A673 (cell line): ENCODE measurements at regions of chr1 and their contacts with region 1.

Region 1: GRCh38 chr1:160078512-160079195 is 2.7 kb upstream of the KCNJ9 start:
- DNase-seq: peak; percentile 66
- H3K4me3 ChIP-seq: no peak overlapping the region
- H3K27ac ChIP-seq: no peak overlapping the region
- H3K4me1 ChIP-seq: no peaks in the 10 kb centered on the region
- H3K27me3 ChIP-seq: peaks cover 47% of the 10 kb centered on the region
- CTCF ChIP-seq: peak; percentile 95

Region 2: DNA sequence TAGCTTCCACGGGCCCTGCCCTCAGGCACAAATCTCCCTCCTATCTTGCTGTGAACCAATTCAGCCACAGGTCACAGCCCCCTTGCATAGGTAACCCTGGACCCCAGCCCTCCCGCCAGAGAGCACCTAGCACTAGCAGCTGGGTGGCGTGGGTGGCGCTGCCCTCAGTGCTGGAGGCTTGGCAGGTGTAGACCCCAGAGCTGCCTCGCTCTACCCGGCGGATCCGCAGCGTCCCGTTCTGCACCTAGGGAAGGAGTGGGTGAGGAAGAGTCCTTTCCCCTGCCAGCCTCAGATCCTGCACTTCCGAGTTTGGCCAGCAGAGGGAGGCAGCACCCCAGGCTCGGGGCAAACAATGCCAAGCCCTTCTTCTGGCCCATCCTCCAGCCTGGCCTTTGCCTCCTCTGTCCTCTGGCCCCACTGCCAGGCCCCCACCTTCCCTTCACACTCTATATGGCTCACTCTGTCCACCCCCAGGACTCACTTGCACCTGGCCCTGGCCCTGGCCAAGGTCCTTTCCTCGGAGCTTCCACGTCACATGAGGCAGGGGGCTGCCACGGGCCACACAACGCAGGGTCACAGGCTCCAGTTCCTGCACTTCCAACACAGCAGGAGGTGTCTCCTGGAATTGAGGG is 142.3 kb before region 1 on chr1:
- CTCF ChIA-PET with region 1: no interaction called
- POLR2A ChIA-PET with region 1: no interaction called
- intact Hi-C with region 1: loop called (anchors 5 kb)
- DNase-seq: peak; percentile 70
- H3K4me3 ChIP-seq: no peak overlapping the region
- H3K27ac ChIP-seq: no peak overlapping the region
- H3K4me1 ChIP-seq: peaks cover 11% of the 10 kb centered on the region
- H3K27me3 ChIP-seq: no peaks in the 10 kb centered on the region
- CTCF ChIP-seq: peak; percentile 93

Region 3: DNA sequence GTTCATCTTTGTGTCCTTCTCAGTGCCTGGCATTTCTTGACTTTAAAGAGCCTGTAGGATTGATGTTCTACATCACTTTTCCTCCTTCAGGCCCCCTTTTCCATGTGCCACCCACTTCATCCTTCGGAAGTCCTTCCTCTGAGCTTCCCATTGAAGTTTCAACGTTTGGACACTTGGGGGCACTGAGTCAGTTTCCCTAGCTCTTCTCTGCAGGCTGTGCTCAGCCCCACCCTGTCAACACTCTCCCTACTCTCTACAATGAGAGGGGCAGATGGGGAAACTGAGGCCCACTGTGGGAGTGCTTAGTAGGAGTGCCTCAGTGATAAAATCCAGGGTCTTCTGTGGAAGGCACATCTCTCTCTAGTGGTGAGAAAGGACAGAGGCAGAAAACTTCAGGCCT is 20.6 kb before region 1 on chr1:
- CTCF ChIA-PET with region 1: interaction called, 17 read pairs
- POLR2A ChIA-PET with region 1: no interaction called
- intact Hi-C with region 1: no loop called
- DNase-seq: peak; percentile 18
- H3K4me3 ChIP-seq: no peak overlapping the region
- H3K27ac ChIP-seq: no peak overlapping the region
- H3K4me1 ChIP-seq: no peaks in the 10 kb centered on the region
- H3K27me3 ChIP-seq: peaks cover 38% of the 10 kb centered on the region
- CTCF ChIP-seq: peak; percentile 52

Region 4: DNA sequence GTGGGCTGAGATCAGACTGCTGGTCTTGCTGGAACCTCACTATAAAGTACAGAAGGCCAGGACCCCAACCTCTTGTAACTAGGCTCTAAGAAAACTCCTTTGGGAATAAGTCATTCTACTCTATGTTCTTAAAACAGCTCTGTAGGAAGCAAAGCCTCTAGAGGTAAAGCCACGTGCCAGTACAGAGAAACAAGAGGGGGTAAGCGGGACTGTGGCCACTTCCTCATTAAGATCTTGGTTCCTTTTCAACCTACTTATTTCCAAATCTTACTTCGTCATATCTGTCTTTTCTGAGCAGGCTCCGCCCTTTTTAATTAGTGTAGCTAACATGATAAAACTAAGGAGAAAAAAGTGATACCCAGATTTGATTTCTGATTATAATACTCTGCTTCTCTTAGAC is 268.3 kb after region 1 on chr1:
- CTCF ChIA-PET with region 1: no interaction called
- POLR2A ChIA-PET with region 1: no interaction called
- intact Hi-C with region 1: no loop called
- DNase-seq: no peak
- H3K4me3 ChIP-seq: no peak overlapping the region
- H3K27ac ChIP-seq: no peak overlapping the region
- H3K4me1 ChIP-seq: peaks cover 7% of the 10 kb centered on the region
- H3K27me3 ChIP-seq: no peaks in the 10 kb centered on the region
- CTCF ChIP-seq: no peak